Lower leg skin (tissue), 4 donors: ENCODE measurements at regions of chr5 and their contacts with region 1.

Region 1: DNA sequence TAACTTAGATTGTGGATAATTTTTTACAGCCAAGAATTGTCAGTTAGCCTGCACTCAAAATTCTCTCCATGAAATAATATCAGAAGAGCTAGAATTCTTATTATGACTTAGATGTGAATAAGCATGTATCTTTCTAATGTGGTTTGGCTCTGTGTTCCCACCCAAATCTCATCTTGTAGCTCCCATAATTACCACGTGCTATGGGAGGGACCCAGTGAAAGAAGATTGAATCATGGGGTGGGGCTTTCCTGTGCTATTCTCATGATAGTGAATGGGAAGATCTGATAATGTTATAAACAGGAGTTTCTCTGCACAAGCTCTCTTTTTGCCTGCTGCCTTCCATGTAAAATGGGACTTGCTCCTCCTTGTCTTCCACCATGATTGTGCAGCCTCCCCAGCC is 176.8 kb downstream of the MAT2B start:
- DNase-seq: no peak
- H3K4me3 ChIP-seq: no peak overlapping the region
- CTCF ChIP-seq: no peak
- POLR2A ChIP-seq: no peak

Region 2: DNA sequence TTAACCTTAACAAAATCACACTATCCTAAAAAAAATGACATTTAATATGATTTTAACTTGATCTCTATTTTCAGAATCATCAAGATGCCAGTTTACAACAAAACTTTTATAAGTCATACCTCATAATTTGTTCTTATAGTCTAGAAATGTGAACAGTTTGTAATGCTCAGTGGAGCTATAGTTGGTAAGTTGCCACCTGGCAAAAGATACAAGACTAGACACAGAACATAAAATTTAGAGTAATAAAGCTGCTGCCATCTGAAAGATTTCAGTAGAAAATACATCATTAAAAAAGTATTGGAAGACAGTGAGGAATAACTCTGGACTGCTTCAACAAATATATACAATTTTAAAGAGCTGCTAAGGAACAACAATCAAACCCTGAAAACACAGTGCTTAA is 1380.9 kb before region 1 on chr5:
- intact Hi-C with region 1: loop called (anchors 5 kb)
- DNase-seq: no peak
- H3K4me3 ChIP-seq: no peak overlapping the region
- CTCF ChIP-seq: no peak
- POLR2A ChIP-seq: no peak

Region 3: GRCh38 chr5:163695830-163696578 is 13.8 kb after region 1 on chr5:
- intact Hi-C with region 1: no loop called
- DNase-seq: no peak
- H3K4me3 ChIP-seq: no peak overlapping the region
- CTCF ChIP-seq: no peak
- POLR2A ChIP-seq: no peak